ENCODE measurements at regions of chr4 and their contacts with region 1.

Region 1: DNA sequence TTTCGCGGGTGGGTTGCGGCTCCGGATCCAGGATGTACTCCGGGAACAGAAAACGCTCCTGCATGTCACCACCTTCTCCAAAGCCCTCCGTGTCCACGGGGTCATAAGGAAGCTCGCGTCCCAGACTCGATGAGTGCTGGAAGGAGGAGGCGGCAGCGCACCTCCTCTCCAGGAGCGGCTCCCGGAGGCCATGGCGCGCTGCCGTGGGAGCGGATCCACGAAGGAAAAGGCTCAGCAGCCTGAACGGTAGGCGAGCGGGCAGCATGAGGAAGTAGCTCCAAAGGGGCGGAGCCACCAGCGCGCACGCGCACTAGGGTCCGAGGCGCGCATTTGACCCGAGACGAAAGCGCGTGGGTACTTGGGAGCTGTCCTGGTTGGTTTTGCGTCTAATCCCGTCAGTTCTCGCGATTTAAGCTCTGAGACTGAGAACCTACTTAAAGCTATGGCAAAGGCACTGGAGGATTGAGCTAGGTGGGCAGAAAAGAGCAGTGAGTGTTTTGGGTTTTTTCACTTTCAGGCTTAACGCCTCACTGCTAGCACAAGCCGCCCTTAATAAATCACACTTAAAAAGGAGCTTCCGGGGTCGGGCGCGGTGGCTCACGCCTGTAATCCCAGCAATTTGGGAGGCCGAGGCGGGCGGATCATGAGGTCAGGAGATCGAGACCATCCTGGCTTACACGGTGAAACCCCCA is at the start of gene NOA1:
- DNase-seq: peak; percentile 99
- H3K4me3 Mint-ChIP-seq: peak within 1 kb of the TSS; percentile 99
- H3K27ac Mint-ChIP-seq: peak within 1 kb of the TSS; percentile 98
- H3K4me1 Mint-ChIP-seq: peaks cover 57% of the 10 kb centered on the region
- H3K27me3 Mint-ChIP-seq: no peaks in the 10 kb centered on the region
- total RNA-seq, gene NOA1: 22.1 to 22.6 TPM

Region 2: DNA sequence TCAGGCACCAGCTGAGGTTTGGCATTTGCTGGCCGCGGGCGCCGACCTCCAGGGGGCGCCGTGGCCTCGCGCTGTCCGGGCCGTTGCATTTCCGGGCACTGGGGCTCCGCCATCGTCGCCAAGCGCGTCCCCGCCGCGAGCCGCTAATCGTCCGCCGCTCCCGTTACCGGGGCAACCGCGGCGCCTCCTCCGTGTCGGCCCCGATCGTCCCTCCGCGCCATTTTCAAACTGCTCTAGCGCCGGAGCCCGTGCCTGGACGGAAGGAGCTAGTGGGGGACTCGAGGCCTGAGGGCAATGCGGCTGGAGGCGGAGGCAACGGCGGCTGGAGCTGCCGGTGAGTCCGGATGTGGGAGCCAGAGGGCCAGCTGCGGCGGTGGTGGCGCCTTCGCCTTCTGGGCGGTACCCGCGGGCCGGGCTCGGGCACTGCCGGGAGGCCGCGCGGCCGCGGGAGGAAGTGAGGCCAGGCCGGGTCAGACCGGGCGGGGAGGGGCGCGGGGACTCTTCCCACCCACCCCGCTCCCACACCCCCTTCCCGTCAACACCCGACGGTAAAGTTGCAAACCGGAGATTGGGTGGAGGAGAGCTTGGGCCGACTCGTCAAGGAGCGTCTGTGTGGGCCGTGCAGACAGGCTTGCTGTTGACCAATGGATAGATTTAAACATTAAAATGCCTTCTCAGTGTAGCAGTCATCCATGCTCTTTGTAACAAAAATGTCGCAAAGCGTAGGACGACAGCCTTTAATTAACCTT is 1028.6 kb before region 1 on chr4 and contains the start of gene CEP135:
- CTCF ChIA-PET with region 1: interaction called, 8 read pairs
- POLR2A ChIA-PET with region 1: interaction called, 17 read pairs
- DNase-seq: peak; percentile 95
- H3K4me3 Mint-ChIP-seq: peak within 1 kb of the TSS; percentile 78
- H3K27ac Mint-ChIP-seq: peak within 1 kb of the TSS; percentile 94
- H3K4me1 Mint-ChIP-seq: peaks cover 46% of the 10 kb centered on the region
- H3K27me3 Mint-ChIP-seq: no peaks in the 10 kb centered on the region
- total RNA-seq, gene CEP135: 18.0 to 18.8 TPM

Region 3: GRCh38 chr4:56467284-56468096 is 510.0 kb before region 1 on chr4 and contains the start of gene SRP72:
- CTCF ChIA-PET with region 1: no interaction called
- POLR2A ChIA-PET with region 1: interaction called, 20 read pairs
- DNase-seq: peak; percentile 91
- H3K4me3 Mint-ChIP-seq: peak within 1 kb of the TSS; percentile 94
- H3K27ac Mint-ChIP-seq: peak within 1 kb of the TSS; percentile 95
- H3K4me1 Mint-ChIP-seq: peaks cover 52% of the 10 kb centered on the region
- H3K27me3 Mint-ChIP-seq: no peaks in the 10 kb centered on the region
- total RNA-seq, gene SRP72: 140 to 142 TPM

Region 4: DNA sequence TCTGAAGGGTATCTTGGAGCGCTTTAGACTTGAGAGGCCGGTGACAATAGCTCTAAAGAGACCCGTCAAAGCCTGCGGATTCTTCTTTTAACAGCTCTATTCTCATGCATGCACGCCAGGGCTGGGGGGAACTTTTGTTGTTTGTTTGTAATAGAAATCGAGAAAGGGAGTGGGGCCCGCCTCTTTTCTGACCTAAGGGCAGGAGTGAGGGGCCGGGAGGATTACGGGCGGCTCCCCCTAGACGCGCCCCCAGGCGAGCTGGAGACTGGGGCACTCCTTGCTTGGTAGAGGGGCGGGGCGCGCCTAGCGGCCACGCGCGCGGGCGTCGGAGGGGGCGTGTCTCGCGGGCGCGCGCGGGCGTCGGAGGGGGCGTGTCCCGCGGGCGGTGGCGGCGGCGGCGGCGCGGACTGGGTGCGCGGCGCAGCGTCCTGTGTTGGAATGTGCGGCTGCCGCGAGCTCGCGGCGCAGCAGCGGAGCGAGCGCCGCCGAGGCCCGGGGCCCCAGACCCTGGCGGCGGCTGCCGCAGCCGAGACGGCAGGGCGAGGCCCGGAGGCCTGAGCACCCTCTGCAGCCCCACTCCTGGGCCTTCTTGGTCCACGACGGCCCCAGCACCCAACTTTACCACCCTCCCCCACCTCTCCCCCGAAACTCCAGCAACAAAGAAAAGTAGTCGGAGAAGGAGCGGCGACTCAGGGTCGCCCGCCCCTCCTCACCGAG is 69.8 kb before region 1 on chr4 and contains the start of gene REST:
- CTCF ChIA-PET with region 1: interaction called, 51 read pairs
- POLR2A ChIA-PET with region 1: interaction called, 208 read pairs
- DNase-seq: peak; percentile 83
- H3K4me3 Mint-ChIP-seq: peak within 1 kb of the TSS; percentile 79
- H3K27ac Mint-ChIP-seq: peak within 1 kb of the TSS; percentile 65
- H3K4me1 Mint-ChIP-seq: peaks cover 40% of the 10 kb centered on the region
- H3K27me3 Mint-ChIP-seq: peaks cover 5% of the 10 kb centered on the region
- total RNA-seq, gene REST: 54.7 to 58.3 TPM

Region 5: GRCh38 chr4:56990109-56990905 is 12.8 kb after region 1 on chr4:
- CTCF ChIA-PET with region 1: interaction called, 5 read pairs
- POLR2A ChIA-PET with region 1: interaction called, 23 read pairs
- DNase-seq: no peak
- H3K4me3 Mint-ChIP-seq: no peak overlapping the region
- H3K27ac Mint-ChIP-seq: no peak overlapping the region
- H3K4me1 Mint-ChIP-seq: peaks cover 13% of the 10 kb centered on the region
- H3K27me3 Mint-ChIP-seq: no peaks in the 10 kb centered on the region

Measured in activated CD4-positive, alpha-beta memory T cell treated with anti-CD3 and anti-CD28 coated beads, Interleukin-2, amount 10 ng/mL, durations not matched to agents 7 days and 5 days (primary cell).